Activated T-helper 1 cell treated with anti-CD3 and anti-CD28 coated beads, Interleukin-12 subunit alpha, Interleukin-12 subunit beta, Interleukin-2, Interleukin-4 antibody, amounts not matched to agents 30 ng/mL and 10 ng/mL and 1 ng/mL, durations not matched to agents 14 hours and 24 hours and 36 hours (primary cell): ENCODE measurements at regions of chr9 and their contacts with region 1.

Region 1: GRCh38 chr9:35882263-35882848 is 12.2 kb upstream of the OR13J1 start:
- DNase-seq: peak; percentile 55
- H3K4me3 Mint-ChIP-seq: no peak overlapping the region
- H3K27ac Mint-ChIP-seq: no peak overlapping the region
- H3K4me1 Mint-ChIP-seq: no peaks in the 10 kb centered on the region
- H3K27me3 Mint-ChIP-seq: peaks cover 22% of the 10 kb centered on the region

Region 2: GRCh38 chr9:35790385-35791296 is 91.7 kb before region 1 on chr9:
- intact Hi-C with region 1: loop called (anchors 1 kb)
- DNase-seq: peak; percentile 45
- H3K4me3 Mint-ChIP-seq: no peak overlapping the region
- H3K27ac Mint-ChIP-seq: no peak overlapping the region
- H3K4me1 Mint-ChIP-seq: peaks cover 10% of the 10 kb centered on the region
- H3K27me3 Mint-ChIP-seq: no peaks in the 10 kb centered on the region

Region 3: GRCh38 chr9:35923927-35924763 is 41.8 kb after region 1 on chr9:
- intact Hi-C with region 1: no loop called
- DNase-seq: no peak
- H3K4me3 Mint-ChIP-seq: no peak overlapping the region
- H3K27ac Mint-ChIP-seq: no peak overlapping the region
- H3K4me1 Mint-ChIP-seq: peaks cover 12% of the 10 kb centered on the region
- H3K27me3 Mint-ChIP-seq: peaks cover 17% of the 10 kb centered on the region